Caco-2 (cell line): ENCODE measurements at regions of chr4 and their contacts with region 1.

Region 1: DNA sequence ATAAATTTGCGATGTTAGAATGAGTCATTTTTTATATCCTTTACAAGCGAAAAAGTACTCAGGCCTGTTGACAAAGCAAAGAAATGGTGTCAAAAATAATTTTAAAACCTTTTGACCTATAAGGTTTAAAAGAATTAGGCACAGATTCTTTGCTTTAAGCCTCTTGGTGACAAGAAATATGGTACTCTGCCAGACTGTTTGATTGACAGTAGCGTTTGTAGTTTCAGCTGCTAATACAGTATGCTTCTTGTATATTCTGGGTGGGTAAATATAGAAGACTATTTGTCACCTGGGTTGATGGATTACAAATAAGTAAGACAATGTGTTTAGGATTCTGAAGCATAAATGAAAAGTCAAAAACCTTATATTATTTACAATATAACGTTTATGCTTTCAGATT is 193.1 kb upstream of the PITX2 start:
- DNase-seq: no peak
- H3K4me3 ChIP-seq: no peak overlapping the region
- H3K4me3 Mint-ChIP-seq: no peak overlapping the region
- H3K27ac Mint-ChIP-seq: no peak overlapping the region
- H3K4me1 ChIP-seq: peaks cover 55% of the 10 kb centered on the region
- H3K4me1 Mint-ChIP-seq: peaks cover 25% of the 10 kb centered on the region
- H3K27me3 ChIP-seq: no peaks in the 10 kb centered on the region
- H3K27me3 Mint-ChIP-seq: no peaks in the 10 kb centered on the region
- CTCF ChIP-seq: no peak

Region 2: GRCh38 chr4:110636680-110637407 is 179.1 kb before region 1 on chr4:
- CTCF ChIA-PET with region 1: no interaction called
- POLR2A ChIA-PET with region 1: interaction called, 3 read pairs
- intact Hi-C with region 1: loop called (anchors 1 kb)
- DNase-seq: peak; percentile 86
- H3K4me3 ChIP-seq: peak overlapping the region; percentile 73
- H3K4me3 Mint-ChIP-seq: peak overlapping the region; percentile 88
- H3K27ac Mint-ChIP-seq: peak overlapping the region; percentile 93
- H3K4me1 ChIP-seq: 0 out of 2 replicates have a peak, but pooled peaks cover 8% of the 10 kb centered on the region
- H3K4me1 Mint-ChIP-seq: peaks cover 20% of the 10 kb centered on the region
- H3K27me3 ChIP-seq: no peaks in the 10 kb centered on the region
- H3K27me3 Mint-ChIP-seq: no peaks in the 10 kb centered on the region
- CTCF ChIP-seq: no peak

Region 3: GRCh38 chr4:110683601-110684000 is 132.3 kb before region 1 on chr4:
- CTCF ChIA-PET with region 1: no interaction called
- POLR2A ChIA-PET with region 1: no interaction called
- intact Hi-C with region 1: no loop called
- DNase-seq: no peak
- H3K4me3 ChIP-seq: no peak overlapping the region
- H3K4me3 Mint-ChIP-seq: no peak overlapping the region
- H3K27ac Mint-ChIP-seq: no peak overlapping the region
- H3K4me1 ChIP-seq: peaks cover 20% of the 10 kb centered on the region
- H3K4me1 Mint-ChIP-seq: peaks cover 27% of the 10 kb centered on the region
- H3K27me3 ChIP-seq: no peaks in the 10 kb centered on the region
- H3K27me3 Mint-ChIP-seq: no peaks in the 10 kb centered on the region
- CTCF ChIP-seq: no peak

Region 4: GRCh38 chr4:110793890-110794554 is 21.9 kb before region 1 on chr4:
- CTCF ChIA-PET with region 1: no interaction called
- POLR2A ChIA-PET with region 1: no interaction called
- intact Hi-C with region 1: loop called (anchors 1 kb)
- DNase-seq: no peak
- H3K4me3 ChIP-seq: no peak overlapping the region
- H3K4me3 Mint-ChIP-seq: no peak overlapping the region
- H3K27ac Mint-ChIP-seq: peak overlapping the region; percentile 13
- H3K4me1 ChIP-seq: peaks cover 32% of the 10 kb centered on the region
- H3K4me1 Mint-ChIP-seq: peaks cover 36% of the 10 kb centered on the region
- H3K27me3 ChIP-seq: no peaks in the 10 kb centered on the region
- H3K27me3 Mint-ChIP-seq: no peaks in the 10 kb centered on the region
- CTCF ChIP-seq: no peak

Region 5: GRCh38 chr4:110926841-110927400 is 111.0 kb after region 1 on chr4:
- CTCF ChIA-PET with region 1: interaction called, 7 read pairs
- POLR2A ChIA-PET with region 1: no interaction called
- intact Hi-C with region 1: loop called (anchors 1 kb)
- DNase-seq: peak; percentile 75 to 79
- H3K4me3 ChIP-seq: no peak overlapping the region
- H3K4me3 Mint-ChIP-seq: peak overlapping the region; percentile 39
- H3K27ac Mint-ChIP-seq: peak overlapping the region; percentile 23
- H3K4me1 ChIP-seq: peaks cover 42% of the 10 kb centered on the region
- H3K4me1 Mint-ChIP-seq: peaks cover 31% of the 10 kb centered on the region
- H3K27me3 ChIP-seq: no peaks in the 10 kb centered on the region
- H3K27me3 Mint-ChIP-seq: no peaks in the 10 kb centered on the region
- CTCF ChIP-seq: no peak

Region 6: GRCh38 chr4:111334361-111334760 is 518.4 kb after region 1 on chr4:
- CTCF ChIA-PET with region 1: no interaction called
- POLR2A ChIA-PET with region 1: no interaction called
- intact Hi-C with region 1: no loop called
- DNase-seq: no peak
- H3K4me3 ChIP-seq: no peak overlapping the region
- H3K4me3 Mint-ChIP-seq: no peak overlapping the region
- H3K27ac Mint-ChIP-seq: no peak overlapping the region
- H3K4me1 ChIP-seq: no peaks in the 10 kb centered on the region
- H3K4me1 Mint-ChIP-seq: no peaks in the 10 kb centered on the region
- H3K27me3 ChIP-seq: no peaks in the 10 kb centered on the region
- H3K27me3 Mint-ChIP-seq: peaks cover 4% of the 10 kb centered on the region
- CTCF ChIP-seq: no peak